Prostate gland (tissue), 2 donors: ENCODE measurements at regions of chr16 and their contacts with region 1.

Region 1: DNA sequence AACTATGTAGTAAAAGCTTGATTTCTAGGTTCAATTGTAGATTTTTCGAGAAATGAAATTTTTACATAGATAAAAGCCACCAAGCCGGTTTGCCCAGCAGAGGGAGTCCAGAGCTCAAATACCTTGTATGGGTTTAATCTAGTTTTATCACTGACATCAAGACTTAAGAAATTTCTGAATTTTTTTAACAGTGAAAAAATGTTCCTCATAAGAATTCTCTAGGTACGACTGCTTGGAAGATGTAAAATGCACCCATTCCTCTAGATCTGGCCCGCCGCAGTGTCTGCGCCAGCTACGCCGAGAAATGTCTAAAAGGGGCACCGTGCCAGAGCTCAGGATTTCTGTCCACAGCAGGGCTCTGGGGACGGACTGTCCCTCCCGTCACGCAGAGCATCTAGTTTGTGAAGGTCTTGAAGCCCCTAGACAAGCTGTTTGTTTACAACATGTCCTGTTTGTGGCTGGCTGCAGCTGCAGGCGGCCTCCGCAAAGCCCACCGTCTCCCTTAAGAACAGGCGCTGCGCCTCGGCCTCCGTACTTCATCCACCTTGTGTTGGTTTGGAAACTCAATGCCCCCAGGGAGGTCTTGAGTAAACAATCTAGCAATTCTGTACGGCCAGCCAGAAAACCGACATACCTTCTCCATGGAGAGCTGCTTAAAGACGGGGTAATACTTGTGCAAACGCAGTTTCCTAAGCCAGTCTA is 24.8 kb downstream of the MAP1LC3B start:
- DNase-seq: no peak
- H3K4me3 ChIP-seq: no peak overlapping the region
- H3K27ac ChIP-seq: no peak overlapping the region
- H3K4me1 ChIP-seq: no peaks in the 10 kb centered on the region
- H3K27me3 ChIP-seq: no peaks in the 10 kb centered on the region
- CTCF ChIP-seq: peak; percentile 24 to 66 (median 60)
- POLR2A ChIP-seq: no peak

Region 2: DNA sequence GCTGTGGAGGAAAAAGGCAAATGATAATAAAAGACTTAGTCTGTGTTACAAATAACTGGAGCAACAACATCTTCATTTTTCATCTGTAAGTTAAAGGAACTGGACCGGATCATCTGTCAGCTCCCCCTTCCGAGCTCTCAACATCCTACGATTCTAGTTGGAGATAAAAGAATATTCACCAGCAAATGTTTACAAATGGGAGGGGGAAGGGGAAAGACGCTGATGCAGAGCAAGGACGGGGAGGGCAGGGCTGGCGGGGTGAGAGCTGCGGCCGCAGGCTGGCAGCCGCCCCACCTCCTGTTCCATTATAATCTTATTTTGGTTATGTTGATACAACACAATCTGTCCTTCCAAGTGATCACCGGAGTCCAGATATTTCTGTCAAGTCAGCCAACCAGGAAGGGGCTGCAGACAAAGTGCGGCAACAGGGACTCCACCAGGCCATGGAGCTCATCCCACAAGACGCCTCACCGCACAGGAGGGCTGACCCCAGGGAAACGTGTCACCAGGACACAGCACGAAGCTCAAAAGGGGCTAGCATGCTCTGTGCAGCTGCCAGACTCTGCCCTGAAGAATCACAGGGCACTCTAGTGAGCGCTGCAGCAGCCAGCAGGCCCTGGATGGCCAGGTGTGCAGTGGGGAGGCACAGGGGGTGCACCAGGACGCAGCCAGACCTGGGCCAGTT is 53.1 kb before region 1 on chr16:
- intact Hi-C with region 1: no loop called
- DNase-seq: no peak
- H3K4me3 ChIP-seq: no peak overlapping the region
- H3K27ac ChIP-seq: peak overlapping the region; percentile 24 to 57
- H3K4me1 ChIP-seq: no peaks in the 10 kb centered on the region
- H3K27me3 ChIP-seq: no peaks in the 10 kb centered on the region
- CTCF ChIP-seq: no peak
- POLR2A ChIP-seq: no peak

Region 3: DNA sequence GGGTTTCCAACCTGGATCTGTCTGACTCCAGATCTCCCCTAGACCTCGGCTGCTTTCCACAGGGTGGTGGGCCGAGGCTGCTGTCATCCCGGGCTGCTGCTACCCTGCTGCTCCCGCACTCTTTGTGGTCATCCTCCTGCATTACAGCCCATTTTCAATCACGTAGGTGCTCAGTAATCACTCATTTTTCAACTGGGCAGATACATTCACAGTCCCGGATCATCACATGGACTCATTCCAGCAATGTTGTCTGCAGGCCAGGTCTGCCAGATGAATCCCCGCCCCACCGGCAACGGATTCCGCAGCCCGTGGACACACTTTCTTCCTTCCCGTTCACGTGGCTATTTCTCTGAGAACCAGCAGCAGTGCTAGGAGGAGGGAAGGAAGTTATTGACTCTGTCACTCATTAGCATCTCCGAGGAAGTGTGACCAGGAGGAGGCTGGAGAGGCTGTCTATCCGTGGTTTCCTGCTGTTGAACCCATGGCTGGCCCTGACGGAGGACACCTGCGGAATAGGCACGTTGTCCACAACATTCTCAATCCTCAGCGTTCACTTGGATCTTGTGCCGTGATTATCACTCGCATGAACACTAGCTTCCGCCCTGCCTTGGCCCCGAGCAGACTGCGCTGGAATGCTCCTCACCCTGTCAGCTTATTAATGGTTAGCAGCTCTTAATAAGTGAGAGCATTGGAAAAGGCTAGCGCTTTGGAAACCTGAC is 90.5 kb after region 1 on chr16:
- intact Hi-C with region 1: no loop called
- DNase-seq: no peak
- H3K4me3 ChIP-seq: no peak overlapping the region
- H3K27ac ChIP-seq: no peak overlapping the region
- H3K4me1 ChIP-seq: no peaks in the 10 kb centered on the region
- H3K27me3 ChIP-seq: no peaks in the 10 kb centered on the region
- CTCF ChIP-seq: no peak
- POLR2A ChIP-seq: no peak

Region 4: GRCh38 chr16:87571136-87571867 is 154.3 kb after region 1 on chr16:
- intact Hi-C with region 1: loop called (anchors 2 kb)
- DNase-seq: peak; percentile 52
- H3K4me3 ChIP-seq: no peak overlapping the region
- H3K27ac ChIP-seq: peak overlapping the region in 1 of 2 donors; percentile 25
- H3K4me1 ChIP-seq: peaks cover 7% of the 10 kb centered on the region
- H3K27me3 ChIP-seq: peaks cover 4% of the 10 kb centered on the region
- CTCF ChIP-seq: peak; percentile 24 to 62 (median 30)
- POLR2A ChIP-seq: no peak

Region 5: DNA sequence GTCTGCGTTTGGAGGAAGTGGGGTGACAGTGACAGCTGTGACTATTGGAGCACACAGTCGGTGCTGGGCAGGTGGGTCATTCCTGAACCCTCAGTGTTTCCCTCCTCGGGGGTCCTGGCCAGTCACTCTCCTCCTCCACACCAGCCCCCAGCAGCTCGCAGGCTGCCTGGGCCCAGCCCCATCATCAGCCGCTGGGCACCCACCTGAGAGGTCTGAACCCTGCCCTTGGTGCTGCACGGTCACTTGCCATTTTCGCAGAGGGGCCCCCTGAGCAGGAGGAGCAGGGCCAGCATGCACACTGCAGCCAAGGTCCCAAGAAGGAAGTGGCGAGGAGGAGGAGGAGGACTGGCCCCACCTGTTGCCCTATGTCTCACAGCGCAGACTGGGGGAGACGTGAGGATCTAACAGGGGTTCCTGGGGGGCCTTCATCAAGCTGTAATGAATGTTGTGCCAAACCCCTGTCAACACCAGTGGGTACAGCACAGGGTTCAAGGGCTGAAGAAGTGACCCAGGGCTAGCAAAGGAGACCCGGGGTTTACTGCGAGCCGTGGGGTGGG is 208.3 kb after region 1 on chr16:
- intact Hi-C with region 1: no loop called
- DNase-seq: no peak
- H3K4me3 ChIP-seq: no peak overlapping the region
- H3K27ac ChIP-seq: no peak overlapping the region
- H3K4me1 ChIP-seq: no peaks in the 10 kb centered on the region
- H3K27me3 ChIP-seq: peaks cover 14% of the 10 kb centered on the region
- CTCF ChIP-seq: no peak
- POLR2A ChIP-seq: no peak

Region 6: DNA sequence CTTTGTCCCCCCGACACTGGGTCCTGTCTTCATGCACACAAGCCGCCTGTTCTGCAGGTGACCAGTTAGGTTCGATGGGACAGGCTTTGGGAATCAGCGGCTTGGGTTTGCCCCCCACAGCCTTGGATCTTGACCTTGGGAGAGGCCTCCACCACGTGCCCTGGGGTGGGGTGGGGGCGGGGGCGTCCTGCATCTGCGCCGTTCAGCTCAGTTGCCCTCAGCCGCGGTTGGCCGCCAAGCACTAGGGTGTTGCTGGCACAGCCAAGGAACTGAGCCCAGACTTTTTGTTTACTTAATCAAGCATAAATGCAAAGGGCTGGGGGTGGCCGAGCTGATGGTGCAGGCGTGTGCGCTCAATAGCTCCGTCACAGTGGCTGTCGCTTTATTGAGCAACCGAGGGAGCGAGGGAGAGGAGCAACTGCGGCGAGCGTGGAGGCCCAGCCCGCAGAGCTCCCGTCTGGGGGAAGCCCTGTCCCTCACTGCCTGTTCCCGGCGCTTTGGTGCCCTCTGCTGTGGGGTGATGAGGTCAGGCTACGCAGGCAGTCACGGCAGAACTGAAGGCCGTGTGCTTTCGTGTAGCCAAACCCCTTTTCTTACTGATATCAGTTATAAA is 219.2 kb after region 1 on chr16:
- intact Hi-C with region 1: loop called (anchors 5 kb)
- DNase-seq: peak; percentile 47
- H3K4me3 ChIP-seq: no peak overlapping the region
- H3K27ac ChIP-seq: no peak overlapping the region
- H3K4me1 ChIP-seq: no peaks in the 10 kb centered on the region
- H3K27me3 ChIP-seq: peaks cover 8% of the 10 kb centered on the region
- CTCF ChIP-seq: peak in 3 of 4 experiments; percentile 32 to 64 (median 60)
- POLR2A ChIP-seq: no peak